ENCODE measurements at regions of chr2 and their contacts with region 1.

Region 1: DNA sequence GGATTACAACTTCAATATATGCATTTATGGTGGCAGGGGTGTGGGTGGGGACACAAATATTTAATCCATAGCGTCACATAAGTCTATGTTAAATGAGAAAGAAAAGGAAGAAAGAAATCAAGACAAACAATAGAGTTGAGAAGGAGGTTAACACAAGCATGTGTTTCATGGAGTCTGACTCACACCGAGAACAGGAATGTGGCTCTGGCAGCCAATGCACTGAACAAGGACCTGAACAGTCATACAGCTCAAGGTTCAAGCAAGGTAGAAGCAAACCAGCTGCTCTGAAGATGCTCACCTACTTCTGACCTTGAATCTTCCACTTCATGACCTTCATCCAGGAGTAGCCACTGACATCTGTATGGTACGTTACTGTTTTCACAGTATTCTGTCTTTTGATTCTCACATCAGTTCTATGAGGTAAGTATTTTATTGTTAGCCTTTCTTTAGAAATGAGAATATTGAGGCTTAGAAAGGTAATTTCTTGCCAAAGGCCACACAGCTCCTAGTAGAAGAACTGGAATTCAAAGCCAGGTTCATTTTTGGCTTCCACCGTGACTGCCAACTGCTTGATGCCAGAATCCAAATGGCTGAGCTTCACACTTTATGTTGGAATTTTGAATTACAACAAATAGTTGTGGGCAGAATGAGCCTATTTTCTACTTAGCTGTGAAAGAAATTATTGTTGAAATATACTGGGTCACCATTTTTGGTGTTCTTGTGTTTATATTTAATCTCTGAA is 36.0 kb upstream of the LPIN1 start:
- DNase-seq: no peak
- H3K4me3 ChIP-seq: no peak overlapping the region
- H3K27ac ChIP-seq: peak overlapping the region; percentile 13 to 40; a peak in 3 of 4 replicates
- H3K4me1 ChIP-seq: peaks cover 9 to 18% of the 10 kb centered on the region in 2 experiments; a peak in 3 of 4 replicates
- H3K27me3 ChIP-seq: no peaks in the 10 kb centered on the region
- CTCF ChIP-seq: no peak
- EP300 ChIP-seq: no peak
- RAD21 ChIP-seq: no peak

Region 2: GRCh38 chr2:11656668-11657101 is 53.7 kb before region 1 on chr2:
- CTCF ChIA-PET with region 1: no interaction called
- POLR2A ChIA-PET with region 1: no interaction called
- DNase-seq: no peak
- H3K4me3 ChIP-seq: no peak overlapping the region
- H3K27ac ChIP-seq: no peak overlapping the region
- H3K4me1 ChIP-seq: no peaks in the 10 kb centered on the region; a peak in 1 of 4 replicates
- H3K27me3 ChIP-seq: no peaks in the 10 kb centered on the region; the same call in 1 of the 2 replicates
- CTCF ChIP-seq: no peak
- EP300 ChIP-seq: no peak
- RAD21 ChIP-seq: no peak

Region 3: GRCh38 chr2:11697103-11697871 is 13.1 kb before region 1 on chr2:
- CTCF ChIA-PET with region 1: interaction called, 130 read pairs
- POLR2A ChIA-PET with region 1: interaction called, 4 read pairs
- DNase-seq: peak; percentile 82
- H3K4me3 ChIP-seq: no peak overlapping the region
- H3K27ac ChIP-seq: peak overlapping the region; percentile 56 to 83
- H3K4me1 ChIP-seq: peaks cover 14 to 46% of the 10 kb centered on the region in 2 experiments; a peak in 3 of 4 replicates
- H3K27me3 ChIP-seq: no peaks in the 10 kb centered on the region
- CTCF ChIP-seq: no peak
- EP300 ChIP-seq: peak in 1 of 2 experiments; percentile 31; a peak in 1 of 4 replicates
- RAD21 ChIP-seq: no peak; the same call in 1 of the 2 replicates